ENCODE measurements at regions of chr2 and their contacts with region 1.

Region 1: GRCh38 chr2:237744613-237745249 is 53.8 kb upstream of the RBM44 start:
- DNase-seq: peak; percentile 64 to 91 (median 82)
- H3K4me3 ChIP-seq: no peak overlapping the region
- H3K27ac ChIP-seq: peak overlapping the region in 2 of 59 donors; percentile 2 to 17
- H3K27me3 ChIP-seq: no peaks in the 10 kb centered on the region
- CTCF ChIP-seq: peak; percentile 90 to 100 (median 98)

Region 2: DNA sequence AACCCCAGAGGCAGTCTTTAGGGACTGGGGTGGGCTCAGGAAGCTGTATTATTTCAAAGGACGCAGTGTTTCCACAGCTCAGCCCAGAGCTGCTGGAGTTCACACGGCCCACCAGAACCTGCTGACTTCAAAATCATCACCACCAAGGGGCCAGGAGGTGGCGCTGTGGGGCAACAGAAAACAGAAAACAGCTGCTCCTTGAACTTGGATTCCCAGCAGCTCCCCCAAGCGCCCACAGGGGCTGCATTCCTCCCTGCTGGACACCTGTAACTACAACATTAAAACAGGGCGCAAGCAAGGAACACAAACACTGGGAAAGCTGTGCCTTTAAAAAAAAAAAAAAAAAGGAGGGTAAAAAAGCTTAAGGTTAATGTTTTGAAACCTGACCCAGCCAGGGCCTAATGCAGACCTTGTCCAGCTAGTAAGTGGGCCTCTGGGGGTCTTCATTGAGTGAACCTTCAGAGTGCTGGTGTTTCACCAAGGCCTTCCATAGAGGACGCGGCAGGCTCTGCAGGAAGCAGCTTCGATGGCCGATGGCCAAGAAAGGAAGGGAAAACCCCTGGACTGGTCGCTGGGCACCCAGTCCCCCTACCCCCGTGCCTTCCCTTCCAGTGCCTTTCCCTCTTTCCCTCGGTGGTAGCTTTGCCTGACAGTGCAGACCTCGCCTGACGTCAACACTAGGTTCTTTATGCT is 231.8 kb before region 1 on chr2:
- intact Hi-C with region 1: loop called (anchors 5 kb)
- DNase-seq: peak; percentile 58 to 90 (median 85)
- H3K4me3 ChIP-seq: no peak overlapping the region
- H3K27ac ChIP-seq: peak overlapping the region in 3 of 59 donors; percentile 1 to 41 (median 38)
- H3K27me3 ChIP-seq: peaks cover 0 to 2% (median 0%) of the 10 kb centered on the region in 45 donors
- CTCF ChIP-seq: peak; percentile 67 to 99 (median 94)

Region 3: DNA sequence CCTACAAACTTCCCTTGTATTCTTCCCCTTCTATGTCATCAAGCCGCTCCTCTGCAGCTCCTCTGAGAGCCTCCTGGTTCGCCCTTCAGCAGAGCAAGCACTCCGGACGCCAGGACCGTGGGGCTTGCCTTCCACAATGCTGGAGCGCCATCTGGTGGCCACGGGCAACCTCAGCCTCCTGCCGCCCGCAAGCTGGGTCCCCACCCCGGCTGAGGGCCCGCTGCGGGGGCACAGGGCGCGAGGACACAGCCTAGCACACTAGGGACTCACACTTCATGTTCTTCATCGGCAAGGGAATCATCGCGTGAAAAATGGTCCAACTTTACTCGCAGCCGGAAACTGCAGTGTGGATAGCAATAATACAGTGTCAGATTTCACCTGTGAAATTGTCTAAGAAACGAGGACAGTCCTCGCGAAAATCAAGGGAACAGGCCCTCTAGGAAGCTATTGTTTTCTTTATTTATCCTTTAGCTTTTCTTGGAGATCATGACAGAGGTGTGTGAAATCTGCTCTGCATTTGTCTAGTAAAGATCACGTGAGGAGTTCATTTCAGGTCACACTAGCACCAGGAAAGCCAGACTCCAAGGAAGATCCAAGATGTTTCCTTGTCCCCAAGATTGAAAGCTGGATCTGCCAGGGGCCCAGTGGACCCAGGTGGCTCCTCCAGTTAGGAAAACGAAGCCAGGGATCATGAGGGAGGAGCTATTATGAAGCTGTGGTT is 172.6 kb before region 1 on chr2:
- intact Hi-C with region 1: loop called in 1 of 2 experiments (anchors 10 kb)
- DNase-seq: peak; percentile 77 to 90 (median 86)
- H3K4me3 ChIP-seq: peak overlapping the region in 4 of 59 donors; percentile 3 to 20 (median 4)
- H3K27ac ChIP-seq: no peak overlapping the region
- H3K27me3 ChIP-seq: no peaks in the 10 kb centered on the region
- CTCF ChIP-seq: peak; percentile 90 to 100 (median 99)

Region 4: GRCh38 chr2:237581751-237582746 is 162.7 kb before region 1 on chr2:
- intact Hi-C with region 1: loop called (anchors 5 to 10 kb)
- DNase-seq: peak in 6 of 10 donors; percentile 28 to 63 (median 52)
- H3K4me3 ChIP-seq: peak overlapping the region in 28 of 59 donors; percentile 4 to 49 (median 32)
- H3K27ac ChIP-seq: peak overlapping the region in 16 of 59 donors; percentile 9 to 72 (median 36)
- H3K27me3 ChIP-seq: no peaks in the 10 kb centered on the region
- CTCF ChIP-seq: peak in 53 of 56 donors; percentile 20 to 67 (median 48)

Region 5: GRCh38 chr2:237674731-237675276 is 69.9 kb before region 1 on chr2:
- intact Hi-C with region 1: loop called (anchors 1 to 2 kb)
- DNase-seq: peak in 7 of 10 donors; percentile 42 to 73 (median 61)
- H3K4me3 ChIP-seq: peak overlapping the region in 39 of 59 donors; percentile 1 to 50 (median 27)
- H3K27ac ChIP-seq: peak overlapping the region in 42 of 59 donors; percentile 3 to 81 (median 60)
- H3K27me3 ChIP-seq: peaks cover 0 to 8% (median 0%) of the 10 kb centered on the region in 45 donors
- CTCF ChIP-seq: peak in 10 of 56 donors; percentile 4 to 26 (median 16)

Measured in dorsolateral prefrontal cortex (tissue), 120 donors.